GM18951 (cell line): ENCODE measurements at regions of chr4 and their contacts with region 1.

Region 1: DNA sequence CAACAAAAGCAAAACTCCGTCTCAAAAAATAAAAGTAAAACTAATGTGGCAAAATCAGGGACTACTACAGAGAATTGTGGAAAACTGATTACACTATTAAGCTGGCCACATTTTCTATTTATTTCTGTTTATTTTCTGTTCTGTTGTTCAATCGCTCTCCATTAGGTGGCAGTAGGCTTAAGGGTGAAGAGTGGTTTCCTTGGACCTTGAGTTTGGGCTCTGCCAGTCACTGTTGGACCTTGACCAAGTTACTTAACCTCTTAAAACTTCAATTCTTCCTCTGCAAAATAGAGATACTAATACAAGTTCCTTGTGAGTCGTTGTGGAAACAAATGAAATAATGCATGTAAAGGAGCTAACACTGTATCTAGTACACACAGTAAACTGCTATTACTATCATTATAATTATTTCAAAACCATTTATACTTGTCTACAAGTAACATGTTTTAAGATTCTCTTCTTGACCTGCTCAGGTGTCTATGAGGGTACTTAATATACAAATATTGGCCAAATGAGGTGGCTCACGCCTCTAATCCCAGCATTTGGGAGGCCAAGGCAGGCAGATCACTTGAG is 15.2 kb downstream of the HSD17B11 start:
- POLR2A ChIP-seq: no peak

Region 2: GRCh38 chr4:86993909-86994681 is 381.7 kb before region 1 on chr4:
- in situ Hi-C with region 1: no loop called
- POLR2A ChIP-seq: no peak

Region 3: GRCh38 chr4:87465739-87466366 is 90.0 kb after region 1 on chr4:
- in situ Hi-C with region 1: loop called (anchors 10 kb)
- POLR2A ChIP-seq: no peak

Region 4: DNA sequence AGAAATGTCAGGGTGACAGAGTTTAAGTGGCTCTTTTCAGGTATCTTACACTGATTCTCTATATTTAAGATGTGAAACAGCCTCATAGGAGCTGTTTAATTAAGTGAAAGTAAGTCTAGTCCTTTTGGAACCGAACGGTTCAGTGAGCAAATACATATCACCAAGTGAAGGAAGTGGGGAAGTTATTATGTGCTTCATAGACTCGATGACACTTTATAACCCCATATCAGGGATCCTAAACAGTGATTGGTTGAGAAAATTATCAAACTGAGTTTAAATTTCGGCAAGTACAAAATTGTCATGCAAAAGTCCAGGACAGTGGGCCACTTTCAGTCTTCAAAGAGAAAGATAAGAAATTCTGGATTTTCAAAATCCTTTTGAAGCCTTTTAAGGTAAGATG is 232.4 kb after region 1 on chr4 and contains the start of gene DSPP:
- in situ Hi-C with region 1: no loop called
- POLR2A ChIP-seq: no peak